Naive thymus-derived CD8-positive, alpha-beta T cell (primary cell): ENCODE measurements at regions of chr6 and their contacts with region 1.

Region 1: DNA sequence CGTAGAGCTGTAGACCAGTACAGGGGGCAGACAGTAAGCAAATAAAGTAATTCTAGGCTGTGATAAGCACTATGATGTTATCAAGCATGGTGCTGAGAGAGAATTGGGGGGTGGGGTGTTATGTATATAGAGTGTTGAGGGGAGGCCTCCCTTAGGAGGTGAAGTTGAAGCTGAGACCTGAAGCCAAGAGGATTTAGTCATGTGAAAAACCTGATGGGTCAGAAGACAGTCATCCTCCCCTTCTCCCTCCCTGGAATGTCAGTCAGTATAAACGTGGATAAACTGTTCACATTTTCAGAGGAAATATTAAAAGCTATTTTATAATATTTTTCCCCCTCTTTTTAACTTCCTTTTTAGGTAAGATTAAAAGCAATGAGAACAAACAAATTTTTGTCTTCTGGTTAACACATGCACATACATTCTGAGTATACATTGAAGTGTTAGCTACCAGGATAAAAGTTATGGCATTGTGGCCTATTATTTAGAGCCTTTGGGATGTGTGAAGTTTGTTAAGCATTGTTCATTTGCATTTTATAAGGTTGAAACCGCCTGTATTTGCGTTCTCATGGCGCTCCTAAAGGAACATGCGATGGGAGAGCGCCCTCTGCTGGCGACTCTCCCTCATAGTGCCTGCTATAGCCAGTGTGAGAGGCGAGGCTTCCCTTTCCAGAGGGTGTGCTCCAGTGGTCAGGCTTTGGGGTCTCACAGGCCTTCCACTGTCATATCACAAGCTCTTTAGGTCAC is 35.4 kb upstream of the MAPK13 start:
- DNase-seq: peak; percentile 61 to 86 (median 78)
- ATAC-seq: peak; percentile 68 to 82
- H3K4me3 Mint-ChIP-seq: no peak overlapping the region
- H3K27ac Mint-ChIP-seq: peak overlapping the region; percentile 63 to 92 (median 78)
- H3K4me1 Mint-ChIP-seq: peaks cover 11 to 40% (median 30%) of the 10 kb centered on the region in 4 donors
- H3K27me3 Mint-ChIP-seq: no peaks in the 10 kb centered on the region

Region 2: GRCh38 chr6:35993150-35993549 is 101.8 kb before region 1 on chr6:
- POLR2A ChIA-PET with region 1: no interaction called
- DNase-seq: no peak
- ATAC-seq: no peak
- H3K4me3 Mint-ChIP-seq: no peak overlapping the region
- H3K27ac Mint-ChIP-seq: no peak overlapping the region
- H3K4me1 Mint-ChIP-seq: no peaks in the 10 kb centered on the region
- H3K27me3 Mint-ChIP-seq: peaks cover 0 to 5% (median 3%) of the 10 kb centered on the region in 5 donors

Region 3: DNA sequence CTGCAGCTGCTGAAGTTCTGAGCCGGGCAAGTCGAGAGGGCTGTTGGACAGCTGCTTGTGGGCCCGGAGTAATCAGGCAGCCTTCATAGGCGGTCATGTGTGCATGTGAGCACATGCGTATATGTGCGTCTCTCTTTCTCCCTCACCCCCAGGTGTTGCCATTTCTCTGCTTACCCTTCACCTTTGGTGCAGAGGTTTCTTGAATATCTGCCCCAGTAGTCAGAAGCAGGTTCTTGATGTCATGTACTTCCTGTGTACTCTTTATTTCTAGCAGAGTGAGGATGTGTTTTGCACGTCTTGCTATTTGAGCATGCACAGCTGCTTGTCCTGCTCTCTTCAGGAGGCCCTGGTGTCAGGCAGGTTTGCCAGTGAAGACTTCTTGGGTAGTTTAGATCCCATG is 14.2 kb after region 1 on chr6:
- POLR2A ChIA-PET with region 1: interaction called, 13 read pairs
- DNase-seq: peak in 8 of 10 donors; percentile 43 to 87 (median 67)
- ATAC-seq: peak; percentile 94 to 96
- H3K4me3 Mint-ChIP-seq: peak overlapping the region; percentile 19 to 80 (median 50)
- H3K27ac Mint-ChIP-seq: peak overlapping the region; percentile 91 to 98 (median 96)
- H3K4me1 Mint-ChIP-seq: peaks cover 21 to 73% (median 52%) of the 10 kb centered on the region in 4 donors
- H3K27me3 Mint-ChIP-seq: no peaks in the 10 kb centered on the region